ENCODE measurements at regions of chr9 and their contacts with region 1.

Region 1: DNA sequence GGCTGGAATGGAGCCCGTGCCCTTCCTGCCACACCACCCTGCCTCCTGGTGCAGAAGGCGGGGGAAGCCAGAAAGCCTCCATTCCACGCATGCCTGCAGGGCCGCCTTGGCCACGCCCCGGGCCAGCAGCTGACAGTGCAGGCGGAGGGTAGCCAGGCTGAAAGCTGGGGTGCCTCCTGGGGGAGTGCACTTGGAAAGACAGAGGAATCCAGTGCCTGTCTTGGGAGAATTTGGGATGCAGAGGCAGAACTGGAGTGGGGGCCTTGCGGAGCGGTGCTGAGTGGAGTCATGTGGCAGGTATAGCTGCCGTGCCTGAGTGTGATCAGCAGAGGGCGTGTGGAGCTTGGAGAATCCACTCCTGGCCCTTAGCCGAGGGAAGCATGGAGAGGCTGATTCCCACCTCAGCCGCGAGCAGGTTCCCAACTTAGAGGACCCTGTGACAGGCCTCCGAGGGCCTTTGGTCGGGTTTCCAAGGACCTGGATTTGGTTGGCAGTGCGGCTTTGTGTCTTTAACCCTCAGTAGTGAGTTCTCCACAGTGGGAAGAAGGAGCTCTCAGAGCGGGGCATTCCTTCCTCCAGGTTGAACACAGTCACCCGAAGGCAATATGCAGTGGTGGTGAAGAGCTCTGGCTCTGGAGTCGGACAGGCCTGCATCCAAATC is 9.1 kb upstream of the URM1 start:
- DNase-seq: peak; percentile 73
- ATAC-seq: peak; percentile 87
- H3K4me3 ChIP-seq: peak overlapping the region in 4 of 5 experiments; percentile 7 to 63 (median 48)
- H3K4me3 Mint-ChIP-seq: peak overlapping the region; percentile 85
- H3K27ac ChIP-seq: no peak overlapping the region
- H3K27ac Mint-ChIP-seq: no peak overlapping the region
- H3K4me1 ChIP-seq: peaks cover 10 to 21% of the 10 kb centered on the region in 2 donors
- H3K4me1 Mint-ChIP-seq: peaks cover 9% of the 10 kb centered on the region
- H3K27me3 ChIP-seq: no peaks in the 10 kb centered on the region
- H3K27me3 Mint-ChIP-seq: no peaks in the 10 kb centered on the region
- CTCF ChIP-seq: peak; percentile 89

Region 2: DNA sequence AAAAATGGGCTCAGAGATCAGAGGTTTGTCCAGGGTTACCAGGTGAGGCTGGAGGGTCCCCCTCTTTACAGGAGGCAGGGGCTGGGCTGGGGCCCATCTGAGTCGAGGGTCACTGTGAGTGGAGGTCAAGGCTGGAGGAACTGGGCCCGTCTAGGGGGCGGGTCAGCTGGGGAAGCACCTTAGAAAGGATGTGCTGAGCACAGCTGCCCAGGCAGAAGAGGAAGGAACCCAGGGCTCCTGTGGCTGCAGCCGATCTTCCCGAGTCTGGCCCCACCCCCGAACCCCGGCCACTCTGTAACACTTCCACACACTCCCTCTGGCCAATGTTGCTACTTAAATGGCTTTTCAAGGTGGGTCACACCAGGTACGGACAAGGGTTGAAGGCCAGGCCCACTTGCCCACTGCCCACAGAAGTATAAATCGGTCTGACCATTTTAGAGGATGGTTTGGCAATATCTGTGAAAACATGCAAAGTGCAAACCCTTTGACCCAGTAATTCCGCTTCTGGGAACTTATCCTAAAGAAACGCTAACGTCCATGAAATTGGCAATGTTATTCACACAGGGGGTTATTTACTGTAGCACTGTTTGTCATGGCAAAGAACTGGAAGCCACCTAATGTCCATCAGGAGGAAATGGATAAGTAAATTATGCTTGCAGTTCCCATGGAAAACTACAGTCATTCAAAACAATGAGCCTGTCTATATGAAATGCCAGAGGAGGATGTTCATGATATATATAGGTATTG is 350.9 kb before region 1 on chr9:
- CTCF ChIA-PET with region 1: no interaction called
- POLR2A ChIA-PET with region 1: no interaction called
- intact Hi-C with region 1: no loop called
- DNase-seq: peak; percentile 48
- ATAC-seq: peak; percentile 15
- H3K4me3 ChIP-seq: no peak overlapping the region
- H3K4me3 Mint-ChIP-seq: peak overlapping the region; percentile 39
- H3K27ac ChIP-seq: peak overlapping the region in 1 of 2 donors; percentile 12
- H3K27ac Mint-ChIP-seq: peak overlapping the region; percentile 89
- H3K4me1 ChIP-seq: peaks cover 33 to 49% of the 10 kb centered on the region in 2 donors
- H3K4me1 Mint-ChIP-seq: peaks cover 46% of the 10 kb centered on the region
- H3K27me3 ChIP-seq: no peaks in the 10 kb centered on the region
- H3K27me3 Mint-ChIP-seq: no peaks in the 10 kb centered on the region
- CTCF ChIP-seq: no peak

Region 3: GRCh38 chr9:128244837-128245231 is 117.3 kb before region 1 on chr9:
- CTCF ChIA-PET with region 1: no interaction called
- POLR2A ChIA-PET with region 1: no interaction called
- intact Hi-C with region 1: no loop called
- DNase-seq: no peak
- ATAC-seq: peak; percentile 31
- H3K4me3 ChIP-seq: no peak overlapping the region
- H3K4me3 Mint-ChIP-seq: no peak overlapping the region
- H3K27ac ChIP-seq: no peak overlapping the region
- H3K27ac Mint-ChIP-seq: no peak overlapping the region
- H3K4me1 ChIP-seq: peaks cover 5 to 13% of the 10 kb centered on the region in 2 donors
- H3K4me1 Mint-ChIP-seq: peaks cover 17% of the 10 kb centered on the region
- H3K27me3 ChIP-seq: peaks cover 0 to 32% (median 7%) of the 10 kb centered on the region in 4 experiments
- H3K27me3 Mint-ChIP-seq: peaks cover 26% of the 10 kb centered on the region
- CTCF ChIP-seq: no peak

Region 4: GRCh38 chr9:128317629-128318028 is 44.5 kb before region 1 on chr9:
- CTCF ChIA-PET with region 1: no interaction called
- POLR2A ChIA-PET with region 1: no interaction called
- intact Hi-C with region 1: no loop called
- DNase-seq: no peak
- ATAC-seq: no peak
- H3K4me3 ChIP-seq: no peak overlapping the region
- H3K4me3 Mint-ChIP-seq: no peak overlapping the region
- H3K27ac ChIP-seq: no peak overlapping the region
- H3K27ac Mint-ChIP-seq: no peak overlapping the region
- H3K4me1 ChIP-seq: peaks cover 7 to 10% of the 10 kb centered on the region in 2 donors
- H3K4me1 Mint-ChIP-seq: peaks cover 10% of the 10 kb centered on the region
- H3K27me3 ChIP-seq: no peaks in the 10 kb centered on the region
- H3K27me3 Mint-ChIP-seq: no peaks in the 10 kb centered on the region
- CTCF ChIP-seq: no peak

Region 5: GRCh38 chr9:128349125-128349524 is 13.0 kb before region 1 on chr9:
- CTCF ChIA-PET with region 1: interaction called, 11 read pairs
- POLR2A ChIA-PET with region 1: no interaction called
- intact Hi-C with region 1: no loop called
- DNase-seq: no peak
- ATAC-seq: no peak
- H3K4me3 ChIP-seq: no peak overlapping the region
- H3K4me3 Mint-ChIP-seq: no peak overlapping the region
- H3K27ac ChIP-seq: no peak overlapping the region
- H3K27ac Mint-ChIP-seq: no peak overlapping the region
- H3K4me1 ChIP-seq: no peaks in the 10 kb centered on the region
- H3K4me1 Mint-ChIP-seq: no peaks in the 10 kb centered on the region
- H3K27me3 ChIP-seq: no peaks in the 10 kb centered on the region
- H3K27me3 Mint-ChIP-seq: no peaks in the 10 kb centered on the region
- CTCF ChIP-seq: no peak

Region 6: GRCh38 chr9:128438343-128439109 is 76.4 kb after region 1 on chr9:
- CTCF ChIA-PET with region 1: interaction called, 10 read pairs
- POLR2A ChIA-PET with region 1: interaction called, 4 read pairs
- intact Hi-C with region 1: no loop called
- DNase-seq: peak; percentile 84
- ATAC-seq: peak; percentile 94
- H3K4me3 ChIP-seq: no peak overlapping the region
- H3K4me3 Mint-ChIP-seq: no peak overlapping the region
- H3K27ac ChIP-seq: no peak overlapping the region
- H3K27ac Mint-ChIP-seq: no peak overlapping the region
- H3K4me1 ChIP-seq: peaks cover 3 to 8% of the 10 kb centered on the region in 2 donors
- H3K4me1 Mint-ChIP-seq: peaks cover 7% of the 10 kb centered on the region
- H3K27me3 ChIP-seq: no peaks in the 10 kb centered on the region
- H3K27me3 Mint-ChIP-seq: no peaks in the 10 kb centered on the region
- CTCF ChIP-seq: peak; percentile 90

Measured in B cell (primary cell).